ENCODE measurements at regions of chr4 and their contacts with region 1.

Region 1: DNA sequence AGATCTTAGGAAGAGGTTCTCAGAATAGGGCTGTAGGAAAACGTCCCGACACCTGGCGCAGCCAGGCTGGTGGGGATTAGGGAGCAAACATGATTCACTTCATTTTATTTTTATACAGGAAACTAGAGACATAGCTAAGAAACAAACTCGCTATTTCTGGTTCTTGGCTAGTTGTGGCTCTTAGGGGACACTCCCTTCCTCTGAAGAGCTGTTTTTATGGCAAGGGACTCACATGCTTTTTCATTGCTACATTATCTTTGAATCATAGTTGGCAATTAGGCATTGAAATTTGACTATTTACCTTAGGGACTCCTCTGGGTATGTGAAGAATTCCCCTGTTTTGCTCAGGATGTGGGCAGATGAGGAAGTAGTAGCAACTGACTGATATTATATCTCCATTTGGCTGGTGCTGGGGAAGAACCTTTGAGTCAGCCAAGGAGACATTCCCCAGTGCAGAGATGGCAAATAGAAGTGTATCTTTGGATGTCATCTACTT is 174.5 kb downstream of the SMIM20 start:
- DNase-seq: peak; percentile 59
- H3K4me3 Mint-ChIP-seq: peak overlapping the region; percentile 62
- H3K27ac Mint-ChIP-seq: peak overlapping the region; percentile 94
- H3K4me1 Mint-ChIP-seq: peaks cover 61% of the 10 kb centered on the region
- H3K27me3 Mint-ChIP-seq: no peaks in the 10 kb centered on the region

Region 2: DNA sequence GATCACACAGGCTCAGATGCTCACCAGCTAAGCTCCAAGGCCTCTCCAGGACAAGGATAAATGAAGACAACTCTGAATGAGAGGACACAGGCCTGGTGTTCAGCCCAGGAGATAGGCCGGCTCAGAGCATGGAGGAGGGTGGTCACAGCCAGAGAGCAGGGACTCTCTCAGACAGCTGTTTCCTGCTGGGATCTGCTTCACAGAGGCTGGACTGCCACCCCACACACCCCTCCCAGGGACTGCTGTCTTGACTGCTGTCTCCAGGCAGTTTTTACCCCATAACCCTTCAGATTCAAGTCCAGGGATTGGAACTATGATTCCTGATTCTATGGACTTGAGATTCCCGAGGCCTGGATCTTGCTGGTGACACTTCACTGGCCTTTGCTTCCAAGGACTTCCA is 85.4 kb before region 1 on chr4:
- CTCF ChIA-PET with region 1: no interaction called
- POLR2A ChIA-PET with region 1: no interaction called
- intact Hi-C with region 1: no loop called
- DNase-seq: no peak
- H3K4me3 Mint-ChIP-seq: no peak overlapping the region
- H3K27ac Mint-ChIP-seq: no peak overlapping the region
- H3K4me1 Mint-ChIP-seq: no peaks in the 10 kb centered on the region
- H3K27me3 Mint-ChIP-seq: peaks cover 7% of the 10 kb centered on the region

Region 3: DNA sequence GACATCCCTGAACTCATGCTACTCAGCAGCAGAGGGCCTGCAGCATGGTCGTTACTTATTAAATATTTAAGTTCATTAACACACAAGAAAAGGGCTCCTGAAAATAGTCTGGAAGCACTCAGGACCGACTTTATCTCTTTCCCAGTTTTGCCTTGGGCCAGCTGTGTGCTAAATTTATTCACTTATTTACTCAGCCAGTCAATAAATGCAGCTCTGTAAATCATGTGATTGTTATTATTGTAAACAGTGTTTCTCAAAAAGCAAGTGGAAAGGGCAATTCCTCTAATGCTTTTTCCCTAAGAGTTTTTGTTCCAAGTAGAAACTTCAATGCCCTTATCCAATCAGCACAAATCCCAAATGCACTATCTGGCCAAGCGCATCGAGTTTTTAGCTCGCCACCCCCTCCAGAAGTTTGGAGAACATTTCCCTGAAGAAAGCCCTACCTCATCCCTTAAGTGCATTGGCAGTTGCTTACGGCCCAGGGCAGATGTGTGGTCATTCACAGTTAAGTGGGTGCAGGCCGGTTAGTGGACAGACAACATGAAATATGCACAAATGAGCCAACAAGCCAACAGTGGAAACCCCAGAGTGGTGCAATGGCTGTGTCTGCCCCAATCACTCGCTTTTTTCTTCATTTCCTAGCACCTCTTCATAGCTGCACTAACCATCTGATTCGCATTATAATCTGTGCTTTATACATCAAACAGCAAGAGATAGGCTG is 48.7 kb before region 1 on chr4:
- CTCF ChIA-PET with region 1: no interaction called
- POLR2A ChIA-PET with region 1: no interaction called
- intact Hi-C with region 1: no loop called
- DNase-seq: no peak
- H3K4me3 Mint-ChIP-seq: no peak overlapping the region
- H3K27ac Mint-ChIP-seq: no peak overlapping the region
- H3K4me1 Mint-ChIP-seq: peaks cover 11% of the 10 kb centered on the region
- H3K27me3 Mint-ChIP-seq: peaks cover 5% of the 10 kb centered on the region

Region 4: DNA sequence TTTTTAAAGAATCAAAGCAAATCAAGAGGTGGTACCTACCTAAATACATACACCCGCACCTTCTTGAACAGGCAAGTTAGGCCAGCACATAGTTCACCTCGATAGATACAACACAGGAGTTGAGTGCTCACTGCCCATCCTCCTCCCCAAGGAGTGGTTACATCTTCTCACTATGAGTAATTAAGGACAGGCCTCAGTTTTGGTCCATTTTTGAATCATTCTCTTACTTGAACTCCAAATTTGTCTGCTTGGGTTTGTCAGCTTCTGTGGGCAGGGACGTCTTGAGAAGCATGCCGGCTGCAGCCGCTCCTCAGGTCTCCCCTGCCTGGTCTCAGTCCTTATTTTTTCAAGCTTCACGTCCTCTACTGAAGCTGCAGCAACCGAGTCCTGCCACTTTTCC is 41.7 kb after region 1 on chr4:
- CTCF ChIA-PET with region 1: interaction called, 5 read pairs
- POLR2A ChIA-PET with region 1: interaction called, 5 read pairs
- intact Hi-C with region 1: loop called (anchors 1 kb)
- DNase-seq: peak; percentile 59
- H3K4me3 Mint-ChIP-seq: no peak overlapping the region
- H3K27ac Mint-ChIP-seq: peak overlapping the region; percentile 67
- H3K4me1 Mint-ChIP-seq: peaks cover 62% of the 10 kb centered on the region
- H3K27me3 Mint-ChIP-seq: no peaks in the 10 kb centered on the region

Region 5: GRCh38 chr4:26144526-26145155 is 56.2 kb after region 1 on chr4:
- CTCF ChIA-PET with region 1: interaction called, 3 read pairs
- POLR2A ChIA-PET with region 1: no interaction called
- intact Hi-C with region 1: loop called (anchors 2 kb)
- DNase-seq: no peak
- H3K4me3 Mint-ChIP-seq: peak overlapping the region; percentile 30
- H3K27ac Mint-ChIP-seq: peak overlapping the region; percentile 90
- H3K4me1 Mint-ChIP-seq: peaks cover 52% of the 10 kb centered on the region
- H3K27me3 Mint-ChIP-seq: no peaks in the 10 kb centered on the region

Measured in activated CD4-positive, alpha-beta memory T cell treated with anti-CD3 and anti-CD28 coated beads for 36 hours (primary cell).